ENCODE measurements at regions of chr3 and their contacts with region 1.

Region 1: GRCh38 chr3:157239082-157239704 is 79.2 kb upstream of the CCNL1 start:
- DNase-seq: peak; percentile 89
- ATAC-seq: peak; percentile 100
- H3K4me3 Mint-ChIP-seq: no peak overlapping the region
- H3K27ac Mint-ChIP-seq: no peak overlapping the region
- H3K4me1 Mint-ChIP-seq: peaks cover 5% of the 10 kb centered on the region
- H3K27me3 Mint-ChIP-seq: no peaks in the 10 kb centered on the region
- CTCF ChIP-seq: peak; percentile 87

Region 2: GRCh38 chr3:157174649-157175498 is 64.3 kb before region 1 on chr3:
- CTCF ChIA-PET with region 1: interaction called, 13 read pairs
- POLR2A ChIA-PET with region 1: no interaction called
- intact Hi-C with region 1: loop called (anchors 5 kb)
- DNase-seq: peak; percentile 99
- ATAC-seq: peak; percentile 97
- H3K4me3 Mint-ChIP-seq: peak overlapping the region; percentile 84
- H3K27ac Mint-ChIP-seq: peak overlapping the region; percentile 92
- H3K4me1 Mint-ChIP-seq: peaks cover 29% of the 10 kb centered on the region
- H3K27me3 Mint-ChIP-seq: no peaks in the 10 kb centered on the region
- CTCF ChIP-seq: no peak

Region 3: DNA sequence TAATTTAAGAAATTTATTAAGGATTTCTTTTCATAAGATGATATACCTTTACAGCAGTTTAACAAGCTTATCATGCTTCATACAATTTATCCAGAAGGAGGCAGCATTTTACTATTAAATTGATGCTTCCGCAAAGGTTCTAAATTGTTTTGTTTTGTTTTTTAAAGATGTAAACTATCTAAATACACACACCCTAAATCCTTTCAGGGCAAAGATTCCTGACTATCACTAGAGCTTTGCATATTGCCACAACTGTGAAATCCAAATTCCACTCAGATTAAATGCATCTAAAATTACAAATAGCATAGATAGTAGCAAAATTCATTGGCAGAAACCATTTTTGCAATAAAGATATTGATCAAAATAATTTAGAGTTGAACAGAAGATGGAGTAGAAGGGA is 34.8 kb before region 1 on chr3:
- CTCF ChIA-PET with region 1: interaction called, 12 read pairs
- POLR2A ChIA-PET with region 1: no interaction called
- intact Hi-C with region 1: loop called (anchors 2 kb)
- DNase-seq: no peak
- ATAC-seq: no peak
- H3K4me3 Mint-ChIP-seq: no peak overlapping the region
- H3K27ac Mint-ChIP-seq: no peak overlapping the region
- H3K4me1 Mint-ChIP-seq: no peaks in the 10 kb centered on the region
- H3K27me3 Mint-ChIP-seq: no peaks in the 10 kb centered on the region
- CTCF ChIP-seq: no peak